A549 (cell line): ENCODE measurements at regions of chr9 and their contacts with region 1.

Region 1: DNA sequence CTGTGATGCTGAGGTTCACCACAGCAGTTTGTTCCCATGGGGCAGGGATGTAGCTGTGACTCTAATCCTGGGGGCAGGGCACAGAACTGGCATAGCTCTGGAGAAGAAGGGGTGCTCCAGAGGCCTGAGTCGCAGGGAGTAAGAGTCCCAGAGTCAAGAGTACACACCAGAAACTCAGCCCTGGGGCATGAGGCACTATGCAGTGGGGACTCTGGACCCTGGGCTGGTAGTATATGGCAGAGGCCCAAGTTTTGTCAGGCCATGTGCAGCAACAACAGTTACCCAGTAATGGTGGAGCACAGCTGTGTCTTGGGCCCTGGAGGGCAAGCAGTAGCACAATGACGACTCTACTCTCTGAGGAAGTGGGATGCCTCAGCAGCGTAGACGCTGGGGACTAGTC is 42.9 kb downstream of the TMEM38B start:
- DNase-seq: no peak
- ATAC-seq: no peak
- H3K4me3 ChIP-seq: no peak overlapping the region
- H3K27ac ChIP-seq: no peak overlapping the region
- H3K4me1 ChIP-seq: no peaks in the 10 kb centered on the region
- CTCF ChIP-seq: no peak
- EP300 ChIP-seq: no peak
- POLR2A ChIP-seq: no peak
- RAD21 ChIP-seq: no peak

Region 2: GRCh38 chr9:105700668-105701067 is 36.5 kb before region 1 on chr9:
- CTCF ChIA-PET with region 1: no interaction called
- POLR2A ChIA-PET with region 1: no interaction called
- DNase-seq: no peak
- ATAC-seq: no peak
- H3K4me3 ChIP-seq: no peak overlapping the region
- H3K27ac ChIP-seq: no peak overlapping the region
- H3K4me1 ChIP-seq: peaks cover 3% of the 10 kb centered on the region
- CTCF ChIP-seq: no peak
- EP300 ChIP-seq: no peak
- POLR2A ChIP-seq: no peak
- RAD21 ChIP-seq: no peak

Region 3: DNA sequence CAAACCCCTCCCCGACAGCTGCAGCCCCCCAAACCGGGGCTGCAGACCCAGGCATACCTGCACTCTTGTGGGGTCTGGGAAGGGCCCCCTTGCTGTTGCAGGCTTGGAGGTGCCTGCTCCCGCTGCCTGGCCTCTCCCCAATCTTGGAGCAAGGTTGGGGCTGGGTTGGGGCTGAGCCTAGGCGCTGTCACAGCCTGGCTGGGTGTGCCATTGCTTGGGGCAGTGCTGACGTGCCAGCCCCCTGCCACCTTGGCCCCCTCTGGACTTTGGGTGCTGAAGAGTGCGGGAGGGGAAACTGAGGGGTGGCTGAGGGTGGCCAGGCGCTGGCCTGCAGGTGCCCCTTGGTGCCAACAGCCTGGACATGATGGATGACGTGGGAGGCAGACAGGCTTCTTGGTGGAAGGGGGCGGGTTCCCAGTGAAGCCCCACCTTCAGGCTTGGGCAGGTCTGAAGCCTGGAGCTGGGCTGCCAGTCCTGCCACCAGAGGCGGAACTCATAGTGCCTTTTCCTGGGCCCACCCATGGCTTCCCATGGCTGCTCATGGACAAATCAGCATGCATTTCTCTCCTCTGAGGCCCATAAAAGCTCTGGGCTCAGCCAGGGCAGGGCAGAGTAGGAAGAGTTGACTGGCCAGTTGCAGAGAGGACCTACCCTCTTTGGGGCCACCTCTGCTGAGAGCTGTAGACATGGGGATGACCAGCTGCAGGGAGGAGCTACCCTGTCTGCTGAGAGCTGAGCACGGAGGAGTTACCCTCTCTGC is 23.8 kb before region 1 on chr9:
- CTCF ChIA-PET with region 1: interaction called, 10 read pairs
- POLR2A ChIA-PET with region 1: no interaction called
- DNase-seq: no peak
- ATAC-seq: no peak
- H3K4me3 ChIP-seq: no peak overlapping the region
- H3K27ac ChIP-seq: no peak overlapping the region
- H3K4me1 ChIP-seq: no peaks in the 10 kb centered on the region
- CTCF ChIP-seq: no peak
- EP300 ChIP-seq: no peak
- POLR2A ChIP-seq: no peak
- RAD21 ChIP-seq: no peak

Region 4: DNA sequence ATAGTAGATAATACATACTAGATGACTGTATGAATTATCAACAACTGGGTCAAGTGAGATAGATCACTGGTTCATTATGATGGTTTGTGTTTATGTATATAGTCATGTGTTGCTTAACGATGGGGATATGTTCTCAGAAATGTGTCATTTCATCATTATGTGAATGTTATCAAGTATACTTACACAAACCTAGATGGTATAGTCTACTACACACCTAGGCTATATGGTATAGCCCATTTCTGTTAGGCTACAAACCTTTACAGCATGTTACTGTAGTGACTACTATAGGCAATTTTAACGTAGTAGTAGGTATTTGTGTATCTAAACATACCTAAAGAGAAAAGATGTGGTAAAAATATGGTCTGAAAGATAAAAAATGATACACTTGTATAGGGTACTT is 11.8 kb before region 1 on chr9:
- CTCF ChIA-PET with region 1: no interaction called
- POLR2A ChIA-PET with region 1: no interaction called
- DNase-seq: no peak
- ATAC-seq: no peak
- H3K4me3 ChIP-seq: no peak overlapping the region
- H3K27ac ChIP-seq: no peak overlapping the region
- H3K4me1 ChIP-seq: no peaks in the 10 kb centered on the region
- CTCF ChIP-seq: no peak
- EP300 ChIP-seq: no peak
- POLR2A ChIP-seq: no peak
- RAD21 ChIP-seq: no peak